ENCODE measurements at regions of chr17 and their contacts with region 1.

Region 1: DNA sequence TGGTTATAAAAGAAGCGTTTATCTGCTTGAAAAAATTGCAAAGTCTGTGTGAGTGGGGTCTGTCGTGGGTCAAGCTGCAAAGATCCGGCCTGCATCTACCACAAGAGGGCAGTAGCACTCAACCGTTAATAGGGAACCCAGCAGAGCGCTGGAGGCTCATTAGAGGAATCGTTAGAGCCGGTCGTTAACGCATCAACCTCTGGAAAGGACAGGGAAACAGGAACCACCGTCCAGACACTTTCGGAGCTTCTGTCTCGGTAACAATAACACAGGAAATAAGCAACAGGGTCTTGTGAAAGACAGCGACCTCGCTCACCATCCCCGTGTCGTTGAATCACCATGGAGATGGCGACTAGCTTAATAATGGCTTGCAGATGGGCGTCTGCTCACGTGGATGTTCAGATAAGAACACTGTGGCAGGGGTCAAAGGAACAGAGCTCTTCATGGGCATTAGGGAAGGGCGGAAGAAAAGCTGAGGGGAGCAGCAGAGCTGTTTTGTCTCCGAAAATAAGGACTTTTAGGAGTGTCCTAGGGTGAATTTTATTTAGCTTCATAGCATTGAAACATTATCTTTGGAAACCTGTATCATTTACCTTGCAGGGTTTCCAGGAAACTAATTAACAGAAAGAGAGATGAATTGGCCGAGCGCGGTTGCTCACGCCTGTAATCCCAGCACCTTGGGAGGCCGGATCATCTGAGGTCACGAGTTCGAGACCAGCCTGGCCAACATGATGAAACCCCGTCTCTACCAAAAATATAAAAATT is 11.9 kb upstream of the NSRP1 start:
- DNase-seq: peak; percentile 59
- H3K4me3 ChIP-seq: peak overlapping the region in 2 of 3 experiments; percentile 15 to 41
- H3K27ac ChIP-seq: no peak overlapping the region
- H3K4me1 ChIP-seq: no peaks in the 10 kb centered on the region
- H3K27me3 ChIP-seq: peaks cover 3% of the 10 kb centered on the region
- CTCF ChIP-seq: peak; percentile 88 to 92

Region 2: DNA sequence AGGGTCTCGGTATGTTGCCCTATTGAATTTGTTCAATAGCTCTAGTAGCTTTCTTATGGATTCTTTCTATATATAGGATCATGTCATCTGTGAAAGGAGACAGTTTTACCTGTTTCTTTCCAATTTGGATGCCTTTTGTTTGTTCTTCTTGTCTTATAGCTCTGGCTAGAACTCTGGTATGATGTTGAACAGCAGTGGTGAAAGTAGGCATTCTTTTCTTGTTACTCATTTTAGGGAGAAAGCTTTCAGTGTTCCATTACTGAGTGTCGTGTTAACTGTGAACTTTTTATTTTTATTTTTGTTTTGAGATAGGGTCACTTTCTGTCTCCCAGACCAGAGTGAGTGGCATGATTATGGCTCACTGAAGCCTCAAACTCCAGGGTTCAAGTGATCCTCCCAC is 142.1 kb before region 1 on chr17:
- CTCF ChIA-PET with region 1: no interaction called
- dilution Hi-C with region 1: no loop called
- in situ Hi-C with region 1: no loop called
- intact Hi-C with region 1: no loop called
- DNase-seq: no peak
- H3K4me3 ChIP-seq: no peak overlapping the region
- H3K27ac ChIP-seq: no peak overlapping the region
- H3K4me1 ChIP-seq: peaks cover 17% of the 10 kb centered on the region
- H3K27me3 ChIP-seq: no peaks in the 10 kb centered on the region
- CTCF ChIP-seq: no peak

Region 3: DNA sequence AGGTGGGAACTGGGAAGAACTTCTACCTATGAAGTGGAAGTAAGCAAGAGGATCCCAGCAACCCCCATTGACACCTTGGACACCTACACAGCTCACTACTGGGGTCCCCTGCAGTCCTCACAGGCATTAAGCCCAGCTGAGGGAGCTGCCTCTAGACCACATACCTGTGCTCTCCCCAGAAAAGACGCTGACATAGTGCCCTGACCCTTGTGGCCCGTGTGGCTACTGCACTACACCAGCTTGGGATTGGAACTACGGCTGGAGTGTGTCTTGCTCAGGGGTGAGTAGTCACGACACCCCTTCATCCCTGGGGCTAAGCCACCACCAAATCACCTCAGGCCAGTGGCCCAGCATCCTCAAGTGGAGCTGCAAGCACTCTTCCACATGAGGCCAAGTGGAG is 42.4 kb before region 1 on chr17:
- CTCF ChIA-PET with region 1: no interaction called
- dilution Hi-C with region 1: no loop called
- in situ Hi-C with region 1: no loop called
- intact Hi-C with region 1: no loop called
- DNase-seq: no peak
- H3K4me3 ChIP-seq: no peak overlapping the region
- H3K27ac ChIP-seq: no peak overlapping the region
- H3K4me1 ChIP-seq: no peaks in the 10 kb centered on the region
- H3K27me3 ChIP-seq: peaks cover 6% of the 10 kb centered on the region
- CTCF ChIP-seq: no peak

Region 4: DNA sequence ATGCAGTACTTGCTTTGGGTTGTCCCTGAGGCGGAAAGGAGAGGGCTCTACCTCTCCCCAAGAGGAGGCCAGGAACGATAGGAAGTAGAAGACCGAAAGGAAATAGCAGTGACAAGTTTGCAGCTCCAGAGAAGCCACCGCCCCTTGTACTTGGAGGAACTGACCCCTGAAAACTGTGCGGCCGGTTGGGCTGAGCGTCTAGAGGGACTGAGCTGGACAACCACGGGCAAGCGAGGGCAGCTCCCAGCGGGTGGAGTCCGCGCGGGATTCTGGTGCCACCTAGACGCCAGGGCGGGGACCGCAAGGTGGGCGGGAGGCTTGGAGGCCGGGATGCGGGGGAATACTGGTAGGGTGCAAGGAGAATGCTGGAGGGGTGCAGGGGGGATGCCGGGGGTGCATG is 132.0 kb after region 1 on chr17:
- CTCF ChIA-PET with region 1: interaction called, 6 read pairs
- dilution Hi-C with region 1: no loop called
- in situ Hi-C with region 1: no loop called
- intact Hi-C with region 1: loop called (anchors 1 kb)
- DNase-seq: peak; percentile 30
- H3K4me3 ChIP-seq: peak overlapping the region in 1 of 3 experiments; percentile 22
- H3K27ac ChIP-seq: no peak overlapping the region
- H3K4me1 ChIP-seq: peaks cover 16% of the 10 kb centered on the region
- H3K27me3 ChIP-seq: peaks cover 47% of the 10 kb centered on the region
- CTCF ChIP-seq: peak; percentile 3 to 72

Region 5: GRCh38 chr17:30336369-30337171 is 231.8 kb after region 1 on chr17:
- CTCF ChIA-PET with region 1: interaction called, 16 read pairs
- dilution Hi-C with region 1: no loop called
- in situ Hi-C with region 1: no loop called
- intact Hi-C with region 1: loop called (anchors 1 kb)
- DNase-seq: peak; percentile 52
- H3K4me3 ChIP-seq: no peak overlapping the region
- H3K27ac ChIP-seq: no peak overlapping the region
- H3K4me1 ChIP-seq: peaks cover 29% of the 10 kb centered on the region
- H3K27me3 ChIP-seq: no peaks in the 10 kb centered on the region
- CTCF ChIP-seq: peak; percentile 61 to 81

Region 6: DNA sequence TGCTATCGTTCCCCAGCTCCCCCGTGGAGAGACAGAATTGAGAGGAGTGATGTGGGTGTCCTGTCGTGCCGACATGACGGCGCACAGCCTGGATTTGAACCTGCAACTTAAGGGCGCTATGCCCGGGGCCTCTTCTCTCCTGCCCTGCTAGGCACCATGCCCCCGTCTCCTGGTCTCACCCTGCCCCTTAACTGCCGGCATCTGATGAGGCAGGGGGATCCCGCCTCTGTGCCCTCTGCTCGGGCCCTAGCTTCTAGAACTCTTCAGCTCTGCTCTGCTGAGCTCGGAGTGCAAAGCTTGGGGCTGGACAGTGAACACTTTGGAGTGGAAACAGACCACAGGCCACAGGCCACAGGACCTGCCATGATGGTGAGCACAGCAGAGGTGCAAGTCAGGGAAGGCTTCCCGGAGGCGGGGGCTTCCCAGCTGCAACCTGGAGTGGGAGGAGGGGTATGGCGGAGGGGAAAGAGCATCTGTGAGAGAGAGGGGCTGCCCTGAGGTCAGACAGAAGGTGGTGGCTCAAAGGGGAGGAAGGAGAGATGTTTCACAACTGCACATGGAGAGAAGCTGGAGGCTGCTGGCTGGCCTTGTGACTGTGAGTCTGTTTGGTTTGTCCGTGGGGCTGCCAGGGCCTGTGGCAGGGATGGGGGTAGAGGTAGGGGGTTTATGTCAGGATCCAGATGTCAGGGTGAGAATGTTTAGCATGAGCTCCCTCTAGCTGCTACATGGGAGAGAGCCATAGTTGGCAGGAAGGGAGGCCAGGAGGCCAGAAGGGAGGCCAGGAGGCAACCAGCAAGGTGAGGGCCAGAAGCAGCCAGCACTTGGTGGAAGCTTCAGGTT is 611.9 kb after region 1 on chr17:
- CTCF ChIA-PET with region 1: no interaction called
- dilution Hi-C with region 1: no loop called
- in situ Hi-C with region 1: no loop called
- intact Hi-C with region 1: loop called (anchors 5 kb)
- DNase-seq: no peak
- H3K4me3 ChIP-seq: no peak overlapping the region
- H3K27ac ChIP-seq: no peak overlapping the region
- H3K4me1 ChIP-seq: no peaks in the 10 kb centered on the region
- H3K27me3 ChIP-seq: no peaks in the 10 kb centered on the region
- CTCF ChIP-seq: peak in 1 of 2 donors; percentile 23

Region 7: GRCh38 chr17:31008374-31009041 is 903.8 kb after region 1 on chr17:
- CTCF ChIA-PET with region 1: interaction called, 40 read pairs
- dilution Hi-C with region 1: no loop called
- in situ Hi-C with region 1: no loop called
- intact Hi-C with region 1: no loop called
- DNase-seq: peak; percentile 72
- H3K4me3 ChIP-seq: peak overlapping the region; percentile 59 to 67 (median 60)
- H3K27ac ChIP-seq: peak overlapping the region; percentile 27
- H3K4me1 ChIP-seq: peaks cover 8% of the 10 kb centered on the region
- H3K27me3 ChIP-seq: no peaks in the 10 kb centered on the region
- CTCF ChIP-seq: peak in 1 of 2 donors; percentile 10